ENCODE measurements at regions of chr18 and their contacts with region 1.

Region 1: GRCh38 chr18:21997207-21998143 is 171.9 kb upstream of the GATA6 start:
- DNase-seq: no peak
- H3K4me3 ChIP-seq: no peak overlapping the region
- H3K27ac ChIP-seq: no peak overlapping the region
- H3K4me1 ChIP-seq: no peaks in the 10 kb centered on the region
- H3K27me3 ChIP-seq: no peaks in the 10 kb centered on the region; a peak in 2 of 7 replicates
- CTCF ChIP-seq: peak; percentile 19 to 86 (median 50)
- EP300 ChIP-seq: no peak
- POLR2A ChIP-seq: no peak
- RAD21 ChIP-seq: peak; percentile 51 to 66; a peak in 3 of 4 replicates

Region 2: GRCh38 chr18:21980744-21981143 is 16.7 kb before region 1 on chr18:
- CTCF ChIA-PET with region 1: interaction called, 18 read pairs
- POLR2A ChIA-PET with region 1: no interaction called
- DNase-seq: no peak
- H3K4me3 ChIP-seq: no peak overlapping the region
- H3K27ac ChIP-seq: no peak overlapping the region
- H3K4me1 ChIP-seq: peaks cover 3 to 4% (median 3%) of the 10 kb centered on the region in 4 experiments; a peak in 5 of 7 replicates
- H3K27me3 ChIP-seq: no peaks in the 10 kb centered on the region
- CTCF ChIP-seq: no peak
- EP300 ChIP-seq: no peak
- POLR2A ChIP-seq: no peak
- RAD21 ChIP-seq: no peak

Region 3: GRCh38 chr18:22020127-22020866 is 22.8 kb after region 1 on chr18:
- CTCF ChIA-PET with region 1: interaction called, 29 read pairs
- POLR2A ChIA-PET with region 1: no interaction called
- DNase-seq: no peak
- H3K4me3 ChIP-seq: no peak overlapping the region
- H3K27ac ChIP-seq: no peak overlapping the region
- H3K4me1 ChIP-seq: no peaks in the 10 kb centered on the region
- H3K27me3 ChIP-seq: no peaks in the 10 kb centered on the region
- CTCF ChIP-seq: no peak
- EP300 ChIP-seq: no peak
- POLR2A ChIP-seq: no peak
- RAD21 ChIP-seq: no peak